Activated B cell treated with CpG ODN at 0.5 μM for 24 hours (primary cell): ENCODE measurements at regions of chr16 and their contacts with region 1.

Region 1: DNA sequence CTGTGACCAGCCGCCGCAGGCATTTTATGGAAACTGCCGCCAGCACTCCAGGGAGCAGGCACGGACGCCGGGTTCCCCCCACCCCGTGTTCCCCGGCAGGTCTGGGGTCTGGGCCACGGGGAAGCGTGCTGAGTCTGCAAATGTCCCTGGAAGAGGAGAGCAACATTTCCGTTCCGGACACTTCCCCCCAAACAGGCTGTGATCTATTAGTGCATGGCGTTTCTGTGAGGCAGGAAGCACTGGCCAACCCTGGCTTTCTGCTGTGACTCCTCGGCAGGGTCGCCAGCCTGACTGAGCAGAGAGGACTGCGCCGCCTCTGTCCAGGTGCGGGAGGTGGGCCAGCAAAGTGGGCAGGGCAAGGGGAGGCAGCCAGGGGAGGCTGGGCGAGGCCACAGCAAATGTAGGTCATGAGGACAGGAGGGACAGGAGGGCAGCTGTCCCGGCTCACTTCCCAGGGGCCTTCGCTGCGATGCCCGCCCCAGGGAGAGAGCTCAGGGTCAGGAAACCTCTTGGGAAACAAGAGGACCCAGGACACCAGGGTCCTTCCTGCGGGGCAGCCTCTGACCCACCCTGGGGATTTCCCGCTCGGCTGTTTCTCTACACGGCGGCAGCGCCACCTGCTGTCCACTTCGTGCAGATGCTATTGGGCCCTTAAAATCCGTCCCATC is 9.5 kb downstream of the FOXF1 start:
- DNase-seq: peak; percentile 43
- ATAC-seq: peak; percentile 60
- H3K4me3 Mint-ChIP-seq: no peak overlapping the region
- H3K27ac Mint-ChIP-seq: no peak overlapping the region
- H3K4me1 Mint-ChIP-seq: peaks cover 5% of the 10 kb centered on the region
- H3K27me3 Mint-ChIP-seq: peaks cover 56% of the 10 kb centered on the region
- CTCF ChIP-seq: peak; percentile 92

Region 2: DNA sequence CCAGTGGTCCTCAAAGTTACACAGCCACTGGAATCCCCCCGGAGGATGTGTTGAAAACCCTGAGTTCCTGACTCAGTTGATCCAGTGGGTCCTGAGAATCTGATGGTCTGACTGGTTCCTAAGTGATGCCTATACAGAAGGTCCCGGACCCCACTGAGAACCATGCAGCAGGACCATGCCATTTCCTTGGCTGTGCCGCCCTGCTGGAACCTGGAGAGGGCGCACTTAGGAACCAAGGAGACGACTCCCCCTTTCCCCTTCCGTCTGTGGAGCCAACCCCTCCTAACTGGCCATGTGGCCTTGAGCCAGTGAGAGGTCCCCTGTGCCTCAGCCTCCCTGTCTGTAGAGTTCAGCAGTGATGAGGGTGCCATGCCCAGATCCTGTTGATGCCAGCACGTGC is 790.9 kb before region 1 on chr16:
- CTCF ChIA-PET with region 1: no interaction called
- POLR2A ChIA-PET with region 1: interaction called, 11 read pairs
- intact Hi-C with region 1: no loop called
- DNase-seq: no peak
- ATAC-seq: no peak
- H3K4me3 Mint-ChIP-seq: no peak overlapping the region
- H3K27ac Mint-ChIP-seq: no peak overlapping the region
- H3K4me1 Mint-ChIP-seq: peaks cover 4% of the 10 kb centered on the region
- H3K27me3 Mint-ChIP-seq: no peaks in the 10 kb centered on the region
- CTCF ChIP-seq: no peak

Region 3: DNA sequence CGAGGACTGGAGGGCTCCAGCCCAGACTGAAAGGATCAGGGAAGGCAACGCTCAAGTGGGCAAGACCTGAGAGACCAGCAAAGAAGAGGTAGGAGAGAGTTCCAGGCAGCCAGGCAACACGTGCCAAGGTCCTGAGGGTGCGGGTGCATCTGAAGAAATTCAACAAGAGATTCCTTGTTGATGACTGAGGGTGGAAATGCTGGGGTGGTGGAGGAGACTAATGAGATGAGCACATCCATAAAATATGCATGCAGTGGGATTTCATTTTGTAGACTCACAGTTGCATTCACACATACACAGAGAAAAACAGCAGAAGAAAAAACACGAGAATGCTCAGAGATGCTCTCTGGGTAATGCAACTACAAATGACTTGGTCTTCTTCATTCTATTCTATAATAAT is 164.2 kb before region 1 on chr16:
- CTCF ChIA-PET with region 1: no interaction called
- POLR2A ChIA-PET with region 1: no interaction called
- intact Hi-C with region 1: no loop called
- DNase-seq: no peak
- ATAC-seq: no peak
- H3K4me3 Mint-ChIP-seq: no peak overlapping the region
- H3K27ac Mint-ChIP-seq: no peak overlapping the region
- H3K4me1 Mint-ChIP-seq: no peaks in the 10 kb centered on the region
- H3K27me3 Mint-ChIP-seq: peaks cover 46% of the 10 kb centered on the region
- CTCF ChIP-seq: no peak

Region 4: GRCh38 chr16:86604436-86605193 is 84.8 kb after region 1 on chr16:
- CTCF ChIA-PET with region 1: no interaction called
- POLR2A ChIA-PET with region 1: no interaction called
- intact Hi-C with region 1: no loop called
- DNase-seq: peak; percentile 44
- ATAC-seq: peak; percentile 99
- H3K4me3 Mint-ChIP-seq: peak overlapping the region; percentile 88
- H3K27ac Mint-ChIP-seq: peak overlapping the region; percentile 79
- H3K4me1 Mint-ChIP-seq: peaks cover 10% of the 10 kb centered on the region
- H3K27me3 Mint-ChIP-seq: peaks cover 17% of the 10 kb centered on the region
- CTCF ChIP-seq: no peak